Activated naive CD4-positive, alpha-beta T cell treated with anti-CD3 and anti-CD28 coated beads, Interleukin-2, amount 10 ng/mL, durations not matched to agents 7 days and 5 days (primary cell): ENCODE measurements at regions of chr5 and their contacts with region 1.

Region 1: DNA sequence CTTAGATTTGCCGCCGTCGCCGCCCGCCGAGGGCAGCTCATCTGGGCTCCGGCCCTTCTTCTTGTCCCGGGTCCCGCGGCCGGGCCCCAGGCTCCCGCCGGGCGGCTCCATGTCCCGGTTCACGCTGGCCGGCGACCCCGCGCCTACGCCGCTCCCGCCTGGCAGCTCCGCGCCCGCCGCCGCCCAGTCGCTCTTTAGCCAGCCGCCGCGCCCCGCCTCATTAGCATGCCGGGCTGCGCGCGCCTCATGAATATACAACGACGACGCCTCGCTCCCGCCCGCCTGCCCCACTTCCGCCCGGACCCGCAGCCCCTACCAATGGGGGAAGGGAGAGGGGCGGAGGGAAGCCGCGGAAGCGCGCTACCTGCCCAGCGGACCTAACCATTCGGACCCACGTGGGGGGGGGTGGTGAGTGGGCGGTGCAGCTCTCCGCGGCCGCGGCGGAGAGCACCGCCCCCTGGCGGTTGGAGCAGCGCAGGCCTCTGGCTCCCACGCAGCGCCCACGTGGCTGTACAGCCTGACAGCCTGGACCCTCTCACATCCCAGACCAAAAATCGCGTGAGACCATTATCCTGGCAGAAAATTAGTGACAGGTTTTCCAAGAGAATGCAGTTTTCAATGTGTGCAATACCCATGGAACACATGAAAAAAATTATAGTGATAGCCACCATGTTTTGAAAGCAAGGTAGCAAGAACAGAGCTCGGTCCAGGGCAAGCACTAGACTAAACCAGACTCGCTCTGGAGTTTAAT is at the start of gene DIAPH1:
- DNase-seq: peak; percentile 98
- H3K4me3 Mint-ChIP-seq: peak within 1 kb of the TSS; percentile 99
- H3K27ac Mint-ChIP-seq: peak within 1 kb of the TSS; percentile 96
- H3K4me1 Mint-ChIP-seq: peaks cover 60% of the 10 kb centered on the region
- H3K27me3 Mint-ChIP-seq: no peaks in the 10 kb centered on the region

Region 2: DNA sequence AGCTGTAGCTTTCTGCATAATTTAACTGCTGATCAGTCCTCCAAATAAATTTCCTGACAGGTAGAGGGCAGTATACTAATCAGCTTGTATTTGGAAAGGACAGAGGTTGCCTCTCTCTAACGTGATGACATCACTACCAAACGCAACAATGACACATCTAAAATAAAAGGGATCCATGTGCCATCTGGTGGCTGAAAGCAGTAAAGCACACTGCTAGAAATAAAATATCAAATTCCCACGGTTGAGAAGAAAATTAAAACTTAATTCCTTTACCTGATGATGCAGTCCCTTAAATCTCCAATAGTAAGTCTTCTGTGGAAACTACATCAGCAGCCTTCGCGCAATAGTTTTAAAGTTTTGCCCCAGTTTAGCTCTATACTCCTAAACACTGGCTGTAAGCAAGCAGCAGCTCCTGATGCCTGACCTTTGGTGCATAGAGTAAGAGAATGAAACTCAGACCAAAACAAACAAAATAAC is 54.7 kb before region 1 on chr5:
- CTCF ChIA-PET with region 1: interaction called, 11 read pairs
- DNase-seq: peak; percentile 73
- H3K4me3 Mint-ChIP-seq: no peak overlapping the region
- H3K27ac Mint-ChIP-seq: peak overlapping the region; percentile 74
- H3K4me1 Mint-ChIP-seq: peaks cover 18% of the 10 kb centered on the region
- H3K27me3 Mint-ChIP-seq: no peaks in the 10 kb centered on the region

Region 3: DNA sequence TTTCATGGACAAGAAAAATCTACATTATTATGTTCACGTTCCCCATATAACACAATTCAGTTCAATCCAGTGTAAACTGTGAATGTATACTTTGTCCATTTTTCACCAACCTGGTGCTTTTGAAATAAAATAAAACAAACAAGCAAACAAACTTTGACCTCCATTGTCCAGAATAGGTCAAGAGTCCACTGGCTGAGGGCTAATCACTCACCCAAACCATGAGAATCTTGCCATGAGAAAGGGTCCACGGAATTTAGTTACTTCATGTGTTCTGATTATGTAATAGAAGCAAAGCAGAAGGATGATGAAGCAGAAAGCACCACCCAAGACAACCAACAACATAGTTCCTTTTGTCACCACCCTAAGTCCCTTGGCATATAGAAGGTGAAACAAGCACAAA is 28.9 kb before region 1 on chr5:
- CTCF ChIA-PET with region 1: interaction called, 236 read pairs
- DNase-seq: no peak
- H3K4me3 Mint-ChIP-seq: no peak overlapping the region
- H3K27ac Mint-ChIP-seq: no peak overlapping the region
- H3K4me1 Mint-ChIP-seq: peaks cover 26% of the 10 kb centered on the region
- H3K27me3 Mint-ChIP-seq: no peaks in the 10 kb centered on the region

Region 4: GRCh38 chr5:141598391-141599350 is 20.3 kb before region 1 on chr5:
- CTCF ChIA-PET with region 1: interaction called, 236 read pairs
- DNase-seq: no peak
- H3K4me3 Mint-ChIP-seq: no peak overlapping the region
- H3K27ac Mint-ChIP-seq: peak overlapping the region; percentile 76
- H3K4me1 Mint-ChIP-seq: peaks cover 80% of the 10 kb centered on the region
- H3K27me3 Mint-ChIP-seq: no peaks in the 10 kb centered on the region

Region 5: GRCh38 chr5:141605523-141606277 is 13.3 kb before region 1 on chr5:
- CTCF ChIA-PET with region 1: interaction called, 34 read pairs
- DNase-seq: peak; percentile 82
- H3K4me3 Mint-ChIP-seq: peak overlapping the region; percentile 59
- H3K27ac Mint-ChIP-seq: peak overlapping the region; percentile 94
- H3K4me1 Mint-ChIP-seq: peaks cover 90% of the 10 kb centered on the region
- H3K27me3 Mint-ChIP-seq: no peaks in the 10 kb centered on the region

Region 6: DNA sequence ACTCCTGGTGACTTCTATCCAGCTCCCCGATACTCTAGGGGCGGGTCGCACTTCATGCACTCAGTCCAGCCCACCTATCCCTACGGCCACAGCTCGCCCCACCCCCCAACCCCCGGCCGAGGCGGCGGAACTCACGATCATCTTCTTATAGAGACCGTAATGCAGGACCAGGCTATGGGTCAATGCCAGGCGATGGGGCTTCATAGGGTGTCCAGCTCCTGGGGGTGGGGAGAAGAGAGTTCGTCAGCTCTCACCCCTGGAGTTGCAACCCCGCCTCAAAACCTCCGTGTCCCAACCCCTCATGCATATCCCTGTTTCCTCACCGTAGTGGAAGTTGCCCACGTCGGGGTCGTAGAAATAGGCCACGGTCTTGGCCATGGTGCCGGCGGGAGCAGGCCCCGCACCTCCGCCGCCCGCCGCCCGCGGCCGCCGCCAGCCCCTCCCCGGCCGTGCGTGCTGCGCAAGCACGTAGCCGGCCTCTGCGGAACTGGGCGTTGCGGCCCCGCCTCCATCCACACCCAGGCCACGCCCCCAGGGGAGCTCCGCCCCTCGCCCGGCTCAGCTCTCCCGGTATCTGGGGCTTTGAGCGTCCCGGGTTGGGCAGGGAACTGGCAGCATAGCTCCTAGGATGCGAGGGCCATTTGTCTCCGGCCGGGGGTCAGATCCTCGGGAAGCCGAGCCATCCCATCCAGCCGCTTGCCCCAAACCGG is 17.6 kb after region 1 on chr5 and contains the starts of genes HDAC3 and RELL2:
- CTCF ChIA-PET with region 1: interaction called, 41 read pairs
- DNase-seq: peak; percentile 95
- H3K4me3 Mint-ChIP-seq: peak within 1 kb of the TSS; percentile 94
- H3K27ac Mint-ChIP-seq: peak within 1 kb of the TSS; percentile 88
- H3K4me1 Mint-ChIP-seq: peaks cover 40% of the 10 kb centered on the region
- H3K27me3 Mint-ChIP-seq: no peaks in the 10 kb centered on the region

Region 7: GRCh38 chr5:141641634-141642267 is 22.8 kb after region 1 on chr5:
- CTCF ChIA-PET with region 1: interaction called, 41 read pairs
- DNase-seq: peak; percentile 19
- H3K4me3 Mint-ChIP-seq: no peak overlapping the region
- H3K27ac Mint-ChIP-seq: no peak overlapping the region
- H3K4me1 Mint-ChIP-seq: peaks cover 22% of the 10 kb centered on the region
- H3K27me3 Mint-ChIP-seq: no peaks in the 10 kb centered on the region